Heart right ventricle (tissue), 16 donors: ENCODE measurements at regions of chr3 and their contacts with region 1.

Region 1: DNA sequence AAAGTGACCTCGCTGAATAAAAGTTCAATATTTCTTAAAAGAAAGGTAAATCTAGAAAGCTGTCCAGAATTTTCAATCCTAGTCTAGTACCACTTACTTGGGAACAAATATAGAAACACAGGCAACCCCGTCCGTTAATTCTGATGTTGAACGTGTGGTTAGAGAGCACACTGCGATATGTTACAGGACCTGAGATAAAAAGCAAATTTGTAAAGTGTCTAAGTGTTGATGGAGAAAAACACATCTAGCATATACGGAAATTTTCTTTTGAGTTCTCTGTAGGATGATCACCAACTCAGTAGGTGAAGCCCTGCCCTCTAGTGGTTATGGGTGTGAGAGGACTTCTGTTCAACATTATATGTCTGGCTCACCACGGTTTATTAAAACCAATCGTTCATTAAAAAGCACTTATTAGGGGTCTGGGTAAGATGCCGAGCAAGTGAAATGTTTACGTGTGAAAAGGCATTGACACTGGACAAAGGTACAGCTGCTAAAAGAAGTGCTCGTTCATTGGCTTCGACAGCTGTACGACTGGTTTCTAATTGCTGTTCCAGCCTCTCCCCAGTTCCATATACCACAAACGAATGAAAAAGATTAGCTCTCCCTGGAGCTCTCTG is 1.0 kb upstream of the ATP2C1 start:
- DNase-seq: peak in 1 of 2 donors; percentile 84
- ATAC-seq: peak; percentile 49 to 91 (median 78)
- H3K4me3 ChIP-seq: peak overlapping the region; percentile 56 to 92 (median 81)
- H3K27ac ChIP-seq: peak overlapping the region; percentile 89 to 99 (median 97)
- H3K4me1 ChIP-seq: peaks cover 0 to 41% (median 21%) of the 10 kb centered on the region in 9 donors
- H3K27me3 ChIP-seq: no peaks in the 10 kb centered on the region
- CTCF ChIP-seq: peak; percentile 70 to 93 (median 83)

Region 2: GRCh38 chr3:130276203-130276803 is 616.6 kb before region 1 on chr3:
- intact Hi-C with region 1: loop called in 1 of 10 experiments (anchors 10 kb)
- DNase-seq: no peak
- ATAC-seq: peak in 3 of 8 donors; percentile 25 to 62 (median 51)
- H3K4me3 ChIP-seq: no peak overlapping the region
- H3K27ac ChIP-seq: no peak overlapping the region
- H3K4me1 ChIP-seq: no peaks in the 10 kb centered on the region
- H3K27me3 ChIP-seq: peaks cover 0 to 16% (median 0%) of the 10 kb centered on the region in 7 donors
- CTCF ChIP-seq: peak; percentile 20 to 78 (median 70)

Region 3: DNA sequence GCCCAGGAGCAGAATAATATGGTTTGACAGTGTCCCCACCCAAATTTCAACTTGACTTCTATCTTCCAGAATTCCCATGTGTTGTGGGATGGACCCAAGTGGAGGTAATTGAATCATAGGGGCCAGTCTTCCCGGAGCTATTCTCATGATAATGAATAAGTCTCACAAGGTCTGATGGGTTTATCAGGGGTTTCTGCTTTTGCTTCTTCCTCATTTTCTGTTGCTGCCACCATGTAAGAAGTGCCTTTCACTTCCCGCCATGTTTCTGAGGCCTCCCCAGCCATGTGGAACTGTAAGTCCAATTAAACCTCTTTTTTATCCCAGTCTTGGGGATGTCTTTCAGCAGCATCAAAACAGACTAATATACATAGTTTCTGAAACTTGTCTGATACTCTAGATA is 27.4 kb before region 1 on chr3:
- intact Hi-C with region 1: loop called in 1 of 10 experiments (anchors 1 kb)
- DNase-seq: no peak
- ATAC-seq: no peak
- H3K4me3 ChIP-seq: no peak overlapping the region
- H3K27ac ChIP-seq: no peak overlapping the region
- H3K4me1 ChIP-seq: no peaks in the 10 kb centered on the region
- H3K27me3 ChIP-seq: no peaks in the 10 kb centered on the region
- CTCF ChIP-seq: no peak